ENCODE measurements at regions of chr12 and their contacts with region 1.

Region 1: DNA sequence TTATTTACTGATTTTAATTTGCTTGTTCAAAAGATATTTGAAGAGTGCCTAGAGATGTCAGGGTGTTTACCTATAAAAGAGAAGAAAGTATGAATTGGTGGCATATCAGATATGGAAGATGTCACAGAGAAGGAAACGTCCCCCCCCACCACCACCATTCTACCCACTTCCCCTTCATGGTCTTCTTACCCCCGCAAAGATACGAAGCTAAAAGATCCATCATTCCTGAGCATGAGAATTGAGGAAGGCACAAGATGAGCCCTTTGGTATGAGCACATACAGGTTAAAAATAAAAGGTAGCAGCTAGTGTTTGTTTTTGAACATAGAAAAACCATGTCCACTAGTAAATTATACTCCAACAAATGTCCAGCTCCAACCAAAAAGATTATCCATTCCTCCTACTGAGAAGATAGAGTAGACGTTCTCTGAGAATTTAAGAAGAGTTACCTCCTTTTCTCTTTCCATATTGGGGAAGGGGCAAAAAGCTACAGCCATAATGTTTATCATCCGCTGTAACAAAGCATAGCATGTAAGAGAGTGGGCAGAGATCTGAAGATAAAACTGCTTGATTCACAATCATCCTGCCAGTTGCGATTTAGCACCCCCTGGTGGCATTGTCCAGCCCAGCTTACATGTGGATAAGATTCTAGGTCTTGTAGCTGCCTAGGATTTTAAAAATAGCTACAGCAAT is 29.1 kb downstream of the NFYB start:
- DNase-seq: peak; percentile 88
- H3K4me3 ChIP-seq: no peak overlapping the region
- H3K27ac ChIP-seq: no peak overlapping the region
- H3K4me1 ChIP-seq: no peaks in the 10 kb centered on the region
- H3K27me3 ChIP-seq: no peaks in the 10 kb centered on the region
- CTCF ChIP-seq: peak; percentile 86

Region 2: DNA sequence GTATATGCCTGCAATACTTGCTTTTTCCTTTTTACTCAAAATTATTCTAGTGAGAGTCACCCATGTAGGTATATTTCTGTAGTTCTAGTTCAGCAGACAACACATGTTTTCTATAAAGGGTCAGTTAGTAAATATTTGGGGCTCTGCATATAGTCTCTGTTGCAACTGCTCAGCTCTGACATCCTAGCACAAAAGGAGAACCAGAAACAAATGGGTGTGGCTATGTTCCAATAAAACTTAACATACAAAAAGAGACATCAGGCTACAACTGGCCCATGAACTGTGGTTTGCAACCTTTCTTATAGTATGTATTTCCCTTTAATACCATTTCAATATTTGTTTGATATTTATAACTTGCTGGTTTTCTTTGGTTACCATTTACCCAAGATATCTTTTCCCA is 279.8 kb before region 1 on chr12:
- intact Hi-C with region 1: no loop called
- DNase-seq: no peak
- H3K4me3 ChIP-seq: no peak overlapping the region
- H3K27ac ChIP-seq: no peak overlapping the region
- H3K4me1 ChIP-seq: no peaks in the 10 kb centered on the region
- H3K27me3 ChIP-seq: no peaks in the 10 kb centered on the region
- CTCF ChIP-seq: no peak

Region 3: DNA sequence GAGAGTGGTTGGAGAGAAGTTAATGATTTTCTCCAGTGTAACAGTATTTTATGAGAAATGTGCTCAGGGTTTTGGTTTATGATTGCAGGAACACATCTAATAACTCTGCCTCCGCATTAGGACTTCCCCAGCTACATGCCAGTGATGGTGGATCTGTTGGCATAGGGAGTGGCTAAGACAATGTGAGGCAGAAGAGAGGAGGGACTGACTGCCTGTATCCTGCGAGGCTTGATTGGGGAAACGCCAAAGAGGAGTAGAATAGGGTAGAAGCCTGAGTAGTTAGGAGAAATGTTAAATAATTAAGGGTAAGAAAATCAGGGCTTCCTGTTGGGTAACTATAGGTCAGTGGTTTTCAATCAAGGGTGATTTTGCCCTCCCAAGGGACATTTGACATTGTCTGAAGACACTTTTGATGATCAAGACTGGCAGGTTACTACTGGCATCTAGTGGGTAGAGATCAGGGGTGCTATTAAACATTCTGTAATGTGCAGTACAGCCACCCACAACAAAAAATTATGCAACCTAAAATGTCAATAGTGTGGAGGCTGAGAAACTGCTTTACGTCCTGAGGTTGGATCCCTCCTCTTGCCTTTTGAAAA is 130.4 kb before region 1 on chr12:
- intact Hi-C with region 1: loop called (anchors 10 kb)
- DNase-seq: no peak
- H3K4me3 ChIP-seq: no peak overlapping the region
- H3K27ac ChIP-seq: no peak overlapping the region
- H3K4me1 ChIP-seq: no peaks in the 10 kb centered on the region
- H3K27me3 ChIP-seq: no peaks in the 10 kb centered on the region
- CTCF ChIP-seq: no peak

Region 4: DNA sequence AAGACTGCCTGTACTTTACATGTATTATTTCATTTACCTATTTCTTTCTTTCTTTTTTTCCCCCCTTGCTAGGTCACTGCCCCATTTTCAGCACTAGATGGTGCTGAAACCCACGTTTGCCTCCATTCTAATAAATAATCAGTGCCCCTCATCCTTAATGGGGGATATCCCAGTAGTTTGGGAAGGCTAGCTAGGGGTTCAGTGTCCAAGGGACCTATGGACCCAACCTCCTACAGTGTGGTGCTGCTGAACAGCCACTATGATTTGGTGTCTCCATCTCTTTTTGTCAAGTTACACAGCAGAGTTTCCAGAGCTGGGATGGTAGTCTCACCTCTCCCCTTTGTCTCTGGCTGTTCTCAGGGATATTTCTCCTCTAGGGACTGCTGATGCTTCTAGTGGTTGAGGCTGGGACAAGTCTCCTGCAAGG is 51.1 kb before region 1 on chr12:
- intact Hi-C with region 1: loop called (anchors 5 kb)
- DNase-seq: no peak
- H3K4me3 ChIP-seq: no peak overlapping the region
- H3K27ac ChIP-seq: no peak overlapping the region
- H3K4me1 ChIP-seq: no peaks in the 10 kb centered on the region
- H3K27me3 ChIP-seq: no peaks in the 10 kb centered on the region
- CTCF ChIP-seq: peak; percentile 60

Measured in colonic mucosa (tissue), 4 donors.